GM12878 (cell line): ENCODE measurements at regions of chr9 and their contacts with region 1.

Region 1: DNA sequence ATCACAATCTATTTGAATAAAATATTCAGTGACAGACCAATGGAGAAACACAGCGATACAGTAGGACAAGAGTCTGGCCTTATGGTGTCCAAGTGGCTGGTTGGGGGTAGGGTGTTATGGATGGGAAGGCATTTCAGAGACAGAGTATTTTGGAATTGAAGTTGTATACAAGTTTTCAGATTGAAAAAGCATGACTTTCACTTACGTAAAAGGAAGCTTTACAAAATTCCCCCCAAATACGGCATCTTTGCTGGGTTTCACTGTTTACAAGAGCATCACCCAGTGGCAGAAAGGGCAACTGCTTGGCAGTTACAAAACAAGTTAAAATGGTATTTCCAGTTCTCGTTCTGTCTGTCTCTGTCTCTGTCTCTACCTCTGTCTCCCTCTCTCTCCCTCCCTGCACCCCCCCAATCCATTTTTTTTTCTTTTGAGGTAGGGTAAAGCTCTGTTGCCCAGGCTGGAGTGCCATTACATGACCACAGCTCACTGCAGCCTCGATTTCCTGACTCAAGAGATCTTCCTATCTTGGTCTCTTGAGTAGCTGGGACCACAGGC is 86.2 kb downstream of the PTPN3 start:
- DNase-seq: peak; percentile 75
- ATAC-seq: peak; percentile 55
- H3K4me3 ChIP-seq: no peak overlapping the region
- H3K27ac ChIP-seq: peak overlapping the region; percentile 77
- H3K4me1 ChIP-seq: peaks cover 52% of the 10 kb centered on the region
- H3K27me3 ChIP-seq: no peaks in the 10 kb centered on the region
- CTCF ChIP-seq: peak; percentile 94 to 97 (median 97); a peak in 5 of 6 replicates
- EP300 ChIP-seq: peak; percentile 92 to 96
- POLR2A ChIP-seq: no peak
- RAD21 ChIP-seq: peak; percentile 88

Region 2: DNA sequence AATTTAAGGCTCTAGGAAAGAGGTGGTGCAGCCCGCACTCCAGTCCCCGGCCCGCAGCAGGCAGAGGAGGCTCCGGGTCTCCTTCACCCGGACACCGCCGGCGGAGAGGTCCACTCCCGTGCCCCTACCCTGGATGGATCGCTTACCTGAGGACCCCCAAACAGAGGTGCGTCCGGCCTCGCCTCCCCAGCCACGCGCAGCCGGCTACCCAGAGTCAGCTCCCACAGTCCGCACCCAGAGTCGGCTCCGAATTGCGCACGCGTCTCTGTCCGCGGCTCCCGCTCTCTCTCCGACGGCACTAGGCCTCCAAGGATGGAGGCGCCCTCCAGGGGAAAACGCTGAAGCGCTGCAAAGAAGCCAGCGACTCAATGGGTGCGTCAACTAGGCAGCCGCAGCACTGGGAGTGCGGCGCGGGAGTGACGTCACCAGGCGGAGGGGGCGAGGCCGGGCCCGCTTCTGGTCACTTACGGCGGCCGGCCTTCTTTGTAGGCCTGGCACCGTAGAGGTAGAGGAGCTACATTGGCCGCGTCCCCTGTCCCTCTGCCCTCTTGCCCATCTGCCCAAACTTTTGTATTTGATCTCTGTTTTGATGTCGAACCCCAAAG is 478.1 kb before region 1 on chr9 and contains the start of gene ELP1:
- CTCF ChIA-PET with region 1: no interaction called
- POLR2A ChIA-PET with region 1: no interaction called
- RAD21 ChIA-PET with region 1: no interaction called
- SMC1A ChIA-PET with region 1: no interaction called
- in situ Hi-C with region 1: no loop called
- intact Hi-C with region 1: loop called (anchors 5 kb)
- DNase-seq: peak; percentile 45
- ATAC-seq: peak; percentile 90
- H3K4me3 ChIP-seq: peak within 1 kb of the TSS; percentile 100
- H3K27ac ChIP-seq: peak within 1 kb of the TSS; percentile 84
- H3K4me1 ChIP-seq: no peaks in the 10 kb centered on the region
- H3K27me3 ChIP-seq: no peaks in the 10 kb centered on the region
- CTCF ChIP-seq: peak; percentile 24 to 41 (median 29); a peak in 4 of 6 replicates
- EP300 ChIP-seq: no peak
- POLR2A ChIP-seq: peak; percentile 86
- RAD21 ChIP-seq: peak; percentile 19; the same call in 1 of the 2 replicates
- polyA plus RNA-seq, gene ELP1: 9.7 to 14.4 TPM

Region 3: DNA sequence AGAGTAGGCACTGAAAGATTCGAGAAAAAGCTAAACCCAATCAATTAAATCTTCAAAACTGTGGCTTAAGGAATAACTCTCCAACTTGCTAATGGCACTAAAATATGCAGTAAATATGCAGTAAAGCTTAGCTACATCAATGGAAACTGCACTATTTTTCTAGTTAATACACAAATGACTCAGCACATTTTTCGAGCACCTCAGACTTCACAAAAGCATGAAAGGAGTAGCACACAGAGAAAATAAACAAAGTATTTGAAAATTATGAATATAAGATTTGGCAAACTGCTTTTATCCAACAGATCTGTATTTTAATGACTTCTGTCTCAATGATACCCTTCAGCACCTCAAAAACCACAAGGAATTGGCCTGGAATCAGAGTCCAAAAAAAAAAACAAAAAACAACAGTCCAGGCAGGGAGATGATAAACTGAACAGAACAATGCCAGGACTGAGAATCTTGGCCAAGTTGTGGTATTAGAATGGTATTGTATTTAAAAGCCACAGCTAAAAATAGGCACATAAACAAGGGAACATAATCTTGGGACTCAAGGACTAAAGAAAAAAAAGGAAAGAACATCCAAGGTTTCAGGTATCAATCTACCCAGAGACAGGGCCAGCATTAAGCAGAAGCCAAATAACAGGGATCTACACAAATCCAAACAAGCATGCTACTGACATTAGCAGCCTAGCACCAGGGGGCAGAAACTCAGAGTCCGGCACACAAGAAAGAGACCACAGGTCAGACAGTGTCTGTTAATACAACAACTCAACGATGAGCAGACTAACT is 313.5 kb before region 1 on chr9:
- CTCF ChIA-PET with region 1: interaction called, 3 read pairs
- POLR2A ChIA-PET with region 1: no interaction called
- RAD21 ChIA-PET with region 1: no interaction called
- SMC1A ChIA-PET with region 1: no interaction called
- in situ Hi-C with region 1: no loop called
- intact Hi-C with region 1: loop called (anchors 5 kb)
- DNase-seq: no peak
- ATAC-seq: peak; percentile 32; the same call in 1 of the 3 replicates
- H3K4me3 ChIP-seq: no peak overlapping the region
- H3K27ac ChIP-seq: no peak overlapping the region
- H3K4me1 ChIP-seq: peaks cover 30% of the 10 kb centered on the region
- H3K27me3 ChIP-seq: no peaks in the 10 kb centered on the region
- CTCF ChIP-seq: no peak
- EP300 ChIP-seq: no peak
- POLR2A ChIP-seq: no peak
- RAD21 ChIP-seq: no peak

Region 4: DNA sequence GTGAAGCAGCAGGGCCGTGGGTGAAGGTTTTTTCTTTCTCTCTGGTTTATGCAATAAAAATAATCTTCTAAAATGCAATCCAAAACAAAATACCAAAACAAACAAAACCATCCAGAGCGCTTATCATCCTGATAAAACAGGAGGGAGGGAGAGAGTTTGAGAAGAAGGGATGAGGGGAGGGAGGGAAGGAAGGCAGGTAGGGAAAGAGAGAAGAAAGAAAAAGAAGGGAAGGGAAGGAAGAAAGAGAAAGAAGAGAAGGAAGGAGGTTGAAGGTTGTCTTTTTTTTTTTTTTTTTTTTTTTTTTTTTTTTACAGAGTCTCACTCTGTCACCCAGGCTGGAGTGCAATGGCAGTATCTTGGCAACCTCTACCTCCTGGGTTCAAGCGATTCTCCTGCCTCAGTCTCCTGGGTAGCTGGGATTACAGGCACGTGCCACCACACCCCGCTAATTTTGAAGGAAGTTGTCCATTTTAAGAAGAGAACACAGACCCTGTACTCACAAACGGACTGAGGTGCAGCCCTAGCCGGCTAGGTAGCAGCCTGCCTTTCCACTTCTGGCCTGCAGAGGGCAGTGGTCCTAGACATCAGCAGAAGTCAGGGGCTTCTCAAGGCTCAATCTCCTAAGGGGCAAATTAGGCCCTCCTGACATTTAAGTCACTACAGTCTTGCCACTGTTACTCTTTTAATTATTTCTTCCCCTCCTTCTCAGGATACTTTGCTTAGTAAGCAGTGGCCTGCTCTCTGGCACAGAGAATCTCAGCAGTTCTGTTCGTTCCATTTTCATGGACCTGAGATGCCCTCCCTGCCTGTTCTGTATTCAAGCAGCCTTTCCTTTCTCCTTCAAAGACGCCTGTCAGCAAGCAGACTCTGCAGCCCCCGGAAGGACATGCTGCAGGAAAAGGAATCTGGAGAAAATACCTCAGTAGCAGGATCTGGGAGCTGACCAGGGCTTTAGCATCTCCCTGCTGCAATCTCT is 167.4 kb before region 1 on chr9:
- CTCF ChIA-PET with region 1: interaction called, 12 read pairs
- POLR2A ChIA-PET with region 1: no interaction called
- RAD21 ChIA-PET with region 1: interaction called, 5 read pairs
- SMC1A ChIA-PET with region 1: interaction called, 3 read pairs
- in situ Hi-C with region 1: no loop called
- intact Hi-C with region 1: no loop called
- DNase-seq: peak; percentile 25
- ATAC-seq: peak; percentile 98
- H3K4me3 ChIP-seq: no peak overlapping the region
- H3K27ac ChIP-seq: no peak overlapping the region
- H3K4me1 ChIP-seq: no peaks in the 10 kb centered on the region
- H3K27me3 ChIP-seq: peaks cover 0 to 2% of the 10 kb centered on the region in 2 experiments; a peak in 1 of 4 replicates
- CTCF ChIP-seq: peak; percentile 83 to 96 (median 95)
- EP300 ChIP-seq: no peak
- POLR2A ChIP-seq: no peak
- RAD21 ChIP-seq: peak; percentile 63

Region 5: GRCh38 chr9:109422641-109423040 is 10.8 kb after region 1 on chr9:
- CTCF ChIA-PET with region 1: interaction called, 14 read pairs
- POLR2A ChIA-PET with region 1: interaction called, 11 read pairs
- RAD21 ChIA-PET with region 1: interaction called, 19 read pairs
- SMC1A ChIA-PET with region 1: interaction called, 65 read pairs
- in situ Hi-C with region 1: no loop called
- intact Hi-C with region 1: no loop called
- DNase-seq: peak; percentile 91
- ATAC-seq: peak; percentile 83
- H3K4me3 ChIP-seq: no peak overlapping the region
- H3K27ac ChIP-seq: peak overlapping the region; percentile 23; the same call in 1 of the 2 replicates
- H3K4me1 ChIP-seq: peaks cover 44% of the 10 kb centered on the region
- H3K27me3 ChIP-seq: no peaks in the 10 kb centered on the region
- CTCF ChIP-seq: no peak
- EP300 ChIP-seq: peak; percentile 63 to 68; a peak in 3 of 4 replicates
- POLR2A ChIP-seq: no peak
- RAD21 ChIP-seq: no peak

Region 6: DNA sequence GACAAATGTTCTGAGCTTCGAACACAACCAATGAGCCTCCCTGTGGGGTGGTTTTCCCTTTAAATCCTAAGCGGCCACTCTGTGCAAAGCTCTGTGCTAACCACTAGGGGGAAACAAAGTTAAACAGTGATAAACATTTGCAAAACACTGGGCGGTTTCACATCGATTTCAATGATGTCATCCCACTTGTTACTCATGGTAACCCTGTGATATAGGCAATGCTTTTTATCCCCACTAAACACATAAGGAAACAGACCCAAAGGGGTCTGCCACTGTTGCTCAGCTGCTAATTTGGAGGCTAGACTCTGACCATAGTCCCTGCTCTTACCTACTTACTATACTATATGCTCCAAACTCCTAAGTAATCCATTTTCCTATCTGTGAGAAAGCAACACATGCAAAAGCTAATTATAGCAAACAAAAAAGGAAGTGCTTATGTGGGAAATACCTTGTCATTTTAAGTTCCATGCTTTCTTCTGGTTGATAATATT is 29.0 kb after region 1 on chr9:
- CTCF ChIA-PET with region 1: interaction called, 214 read pairs
- POLR2A ChIA-PET with region 1: interaction called, 4 read pairs
- RAD21 ChIA-PET with region 1: interaction called, 38 read pairs
- SMC1A ChIA-PET with region 1: interaction called, 116 read pairs
- in situ Hi-C with region 1: no loop called
- intact Hi-C with region 1: loop called (anchors 2 kb)
- DNase-seq: no peak
- ATAC-seq: peak; percentile 89
- H3K4me3 ChIP-seq: no peak overlapping the region
- H3K27ac ChIP-seq: no peak overlapping the region
- H3K4me1 ChIP-seq: peaks cover 19% of the 10 kb centered on the region
- H3K27me3 ChIP-seq: no peaks in the 10 kb centered on the region
- CTCF ChIP-seq: peak; percentile 73 to 86 (median 85)
- EP300 ChIP-seq: 0 out of 4 replicates have a peak, but pooled peaks of 1 of the 2 experiments have one; percentile 28
- POLR2A ChIP-seq: no peak
- RAD21 ChIP-seq: peak; percentile 84